ENCODE measurements at regions of chr7 and their contacts with region 1.

Region 1: GRCh38 chr7:35430547-35431153 is 176.8 kb upstream of the TBX20 start:
- DNase-seq: no peak
- ATAC-seq: peak; percentile 53; the same call in 1 of the 2 replicates
- H3K4me3 ChIP-seq: no peak overlapping the region
- H3K27ac ChIP-seq: no peak overlapping the region
- H3K4me1 ChIP-seq: no peaks in the 10 kb centered on the region
- H3K27me3 ChIP-seq: peaks cover 8% of the 10 kb centered on the region; the same call in 1 of the 2 replicates
- CTCF ChIP-seq: peak; percentile 77

Region 2: GRCh38 chr7:35246819-35247218 is 183.8 kb before region 1 on chr7:
- CTCF ChIA-PET with region 1: interaction called, 11 read pairs
- POLR2A ChIA-PET with region 1: no interaction called
- in situ Hi-C with region 1: no loop called
- intact Hi-C with region 1: no loop called
- DNase-seq: no peak
- ATAC-seq: no peak
- H3K4me3 ChIP-seq: no peak overlapping the region
- H3K27ac ChIP-seq: no peak overlapping the region
- H3K4me1 ChIP-seq: no peaks in the 10 kb centered on the region
- H3K27me3 ChIP-seq: peaks cover 52% of the 10 kb centered on the region
- CTCF ChIP-seq: no peak

Region 3: GRCh38 chr7:35313575-35313974 is 117.1 kb before region 1 on chr7:
- CTCF ChIA-PET with region 1: no interaction called
- POLR2A ChIA-PET with region 1: no interaction called
- in situ Hi-C with region 1: no loop called
- intact Hi-C with region 1: no loop called
- DNase-seq: no peak
- ATAC-seq: no peak
- H3K4me3 ChIP-seq: no peak overlapping the region
- H3K27ac ChIP-seq: no peak overlapping the region
- H3K4me1 ChIP-seq: no peaks in the 10 kb centered on the region
- H3K27me3 ChIP-seq: no peaks in the 10 kb centered on the region; the same call in 1 of the 2 replicates
- CTCF ChIP-seq: no peak

Region 4: GRCh38 chr7:35781200-35781701 is 350.6 kb after region 1 on chr7:
- CTCF ChIA-PET with region 1: no interaction called
- POLR2A ChIA-PET with region 1: no interaction called
- in situ Hi-C with region 1: no loop called
- intact Hi-C with region 1: no loop called
- DNase-seq: no peak
- ATAC-seq: no peak
- H3K4me3 ChIP-seq: no peak overlapping the region
- H3K27ac ChIP-seq: no peak overlapping the region
- H3K4me1 ChIP-seq: no peaks in the 10 kb centered on the region
- H3K27me3 ChIP-seq: peaks cover 31% of the 10 kb centered on the region
- CTCF ChIP-seq: no peak